Dorsolateral prefrontal cortex (tissue), 120 donors: ENCODE measurements at regions of chr1 and their contacts with region 1.

Region 1: GRCh38 chr1:243471754-243472745 is 216.2 kb downstream of the SDCCAG8 start:
- DNase-seq: no peak
- H3K4me3 ChIP-seq: peak overlapping the region in 1 of 59 donors; percentile 57
- H3K27ac ChIP-seq: peak overlapping the region in 58 of 59 donors; percentile 4 to 91 (median 76)
- H3K27me3 ChIP-seq: no peaks in the 10 kb centered on the region
- CTCF ChIP-seq: no peak

Region 2: DNA sequence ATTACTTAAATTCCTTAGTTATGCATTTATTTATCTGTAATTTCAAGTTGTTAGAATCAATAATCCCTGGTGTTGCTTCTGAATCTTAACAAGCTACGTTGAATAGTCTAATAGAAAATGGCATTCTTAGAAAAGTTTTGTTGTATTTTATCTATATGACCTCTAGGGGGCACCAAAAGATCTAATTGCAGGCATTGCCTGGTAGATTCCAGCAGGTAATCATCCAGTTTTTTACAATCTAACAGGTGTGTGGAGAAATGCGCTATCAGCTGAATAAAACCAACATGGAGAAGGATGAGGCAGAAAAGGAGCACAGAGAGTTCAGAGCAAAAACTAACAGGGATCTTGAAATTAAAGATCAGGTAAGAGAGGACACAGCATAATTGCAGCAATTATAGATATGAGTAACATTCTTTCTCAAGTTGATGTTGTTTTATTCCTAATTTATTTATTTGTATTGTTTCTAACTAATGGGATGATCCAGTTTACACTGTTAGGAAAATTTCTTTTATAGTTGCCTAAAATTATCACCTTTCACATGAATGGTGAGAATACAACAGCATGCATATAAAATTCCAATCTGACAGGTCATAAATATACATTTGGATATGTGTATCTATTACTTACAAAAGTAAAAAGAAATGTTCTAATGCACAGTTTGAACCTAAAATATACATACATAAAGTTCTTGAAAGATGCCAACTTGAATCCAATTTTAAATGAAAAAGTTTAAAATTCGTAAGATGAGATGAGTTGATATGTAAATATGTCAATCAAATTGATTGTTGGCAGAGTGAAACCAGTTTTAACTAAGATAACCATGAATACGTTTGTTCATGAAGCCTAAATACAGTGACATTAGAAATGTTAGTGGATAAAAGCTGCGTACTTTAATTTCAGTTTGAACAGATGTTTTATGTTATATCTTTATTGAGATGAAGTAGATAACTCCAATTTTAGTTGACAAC is 127.8 kb before region 1 on chr1:
- intact Hi-C with region 1: loop called (anchors 5 kb)
- DNase-seq: peak in 1 of 10 donors; percentile 25
- H3K4me3 ChIP-seq: no peak overlapping the region
- H3K27ac ChIP-seq: peak overlapping the region in 3 of 59 donors; percentile 3 to 30 (median 13)
- H3K27me3 ChIP-seq: no peaks in the 10 kb centered on the region
- CTCF ChIP-seq: peak; percentile 59 to 95 (median 82)

Region 3: DNA sequence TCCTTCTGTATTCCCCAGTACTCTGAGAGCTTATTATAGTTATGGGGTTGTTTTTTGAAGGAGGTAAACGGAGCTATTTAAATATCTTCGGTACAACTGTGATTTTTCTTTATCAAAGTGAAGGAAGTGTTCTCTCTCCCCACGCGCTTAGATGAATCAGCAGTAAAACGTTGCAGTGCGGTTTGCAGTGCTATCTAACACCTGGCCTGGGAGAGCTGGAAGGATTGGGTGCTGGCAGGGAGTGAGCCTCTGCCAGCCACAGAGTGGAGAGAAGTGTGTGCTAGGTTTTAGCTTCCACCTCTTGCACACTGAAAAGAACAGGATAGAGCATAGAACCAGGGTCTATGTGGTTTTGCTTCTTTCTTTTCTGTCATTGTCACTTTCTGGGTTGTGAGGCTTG is 50.3 kb before region 1 on chr1:
- intact Hi-C with region 1: loop called in 1 of 2 experiments (anchors 5 kb)
- DNase-seq: peak in 7 of 10 donors; percentile 33 to 74 (median 55)
- H3K4me3 ChIP-seq: peak overlapping the region; percentile 20 to 70 (median 56)
- H3K27ac ChIP-seq: peak overlapping the region in 56 of 59 donors; percentile 3 to 90 (median 74)
- H3K27me3 ChIP-seq: no peaks in the 10 kb centered on the region
- CTCF ChIP-seq: no peak

Region 4: DNA sequence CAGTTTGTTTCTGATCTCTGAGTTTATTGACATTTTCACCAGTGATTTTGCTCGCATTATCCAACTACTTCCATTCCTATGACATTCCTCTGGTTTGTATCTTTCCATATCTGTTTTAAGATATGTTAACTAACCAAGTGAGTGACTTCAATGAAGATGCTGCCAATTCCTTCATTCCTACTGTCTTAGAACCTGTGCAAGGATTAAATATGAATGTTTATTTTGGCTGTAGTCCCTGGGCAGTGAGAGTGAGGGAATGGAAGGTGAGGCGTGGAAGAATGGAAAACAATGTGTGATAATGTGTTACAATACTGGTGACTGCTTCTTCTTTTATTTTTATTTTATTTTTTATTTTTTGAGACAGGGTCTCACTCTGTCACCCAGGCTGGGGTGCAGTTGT is 33.2 kb before region 1 on chr1:
- intact Hi-C with region 1: no loop called
- DNase-seq: no peak
- H3K4me3 ChIP-seq: no peak overlapping the region
- H3K27ac ChIP-seq: no peak overlapping the region
- H3K27me3 ChIP-seq: no peaks in the 10 kb centered on the region
- CTCF ChIP-seq: no peak

Region 5: GRCh38 chr1:243708210-243708609 is 236.2 kb after region 1 on chr1:
- intact Hi-C with region 1: loop called in 1 of 2 experiments (anchors 5 kb)
- DNase-seq: no peak
- H3K4me3 ChIP-seq: no peak overlapping the region
- H3K27ac ChIP-seq: peak overlapping the region in 1 of 59 donors; percentile 12
- H3K27me3 ChIP-seq: no peaks in the 10 kb centered on the region
- CTCF ChIP-seq: peak in 51 of 56 donors; percentile 8 to 67 (median 47)

Region 6: GRCh38 chr1:243748706-243749283 is 276.7 kb after region 1 on chr1:
- intact Hi-C with region 1: loop called (anchors 2 to 10 kb)
- DNase-seq: peak in 1 of 10 donors; percentile 46
- H3K4me3 ChIP-seq: no peak overlapping the region
- H3K27ac ChIP-seq: peak overlapping the region in 5 of 59 donors; percentile 1 to 35 (median 9)
- H3K27me3 ChIP-seq: no peaks in the 10 kb centered on the region
- CTCF ChIP-seq: peak; percentile 66 to 96 (median 86)

Region 7: DNA sequence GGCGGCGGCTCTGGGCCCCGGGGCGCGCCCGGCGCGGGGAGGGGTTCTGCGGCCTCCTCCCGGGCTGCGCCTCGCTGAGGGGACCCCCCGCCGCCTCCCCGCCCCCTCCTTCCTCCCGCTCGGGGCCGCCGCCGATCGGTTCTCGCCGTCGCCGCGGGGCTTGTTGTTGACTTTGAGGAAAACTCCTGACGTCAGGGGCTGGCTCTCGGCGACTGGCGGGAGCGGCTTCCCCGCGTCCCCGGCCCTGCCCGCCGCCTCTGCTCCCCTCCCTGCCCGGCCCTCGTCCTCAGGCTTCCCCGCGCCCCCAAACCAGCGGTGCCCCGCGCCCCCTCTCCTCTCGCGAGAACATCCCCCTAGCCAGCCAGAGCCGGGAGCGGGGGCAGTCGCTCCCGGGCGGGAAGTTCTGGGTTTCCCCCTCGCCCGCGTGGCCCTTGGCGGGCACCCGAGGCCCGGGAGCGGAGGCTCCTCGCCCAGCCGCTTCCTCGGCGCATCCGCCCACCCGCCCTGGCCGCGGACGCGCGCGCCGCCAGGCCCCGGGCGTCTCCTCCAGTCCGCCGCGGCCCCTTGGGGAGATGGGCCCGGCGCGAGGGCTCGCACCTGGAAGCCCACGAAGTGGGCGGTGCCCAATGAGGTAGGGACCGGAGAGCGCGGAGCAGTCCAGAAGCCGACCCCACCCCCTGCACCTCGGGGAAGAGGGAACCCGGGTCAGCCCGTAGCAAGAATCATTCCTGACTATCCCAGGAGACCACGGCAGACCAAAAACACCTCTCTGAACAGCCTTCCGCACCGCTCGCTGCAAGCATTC is 378.6 kb after region 1 on chr1:
- intact Hi-C with region 1: loop called in 1 of 2 experiments (anchors 10 kb)
- DNase-seq: peak; percentile 63 to 84 (median 78)
- H3K4me3 ChIP-seq: peak overlapping the region; percentile 59 to 92 (median 81)
- H3K27ac ChIP-seq: peak overlapping the region; percentile 72 to 100 (median 97)
- H3K27me3 ChIP-seq: no peaks in the 10 kb centered on the region
- CTCF ChIP-seq: peak in 4 of 56 donors; percentile 3 to 20 (median 8)

Region 8: DNA sequence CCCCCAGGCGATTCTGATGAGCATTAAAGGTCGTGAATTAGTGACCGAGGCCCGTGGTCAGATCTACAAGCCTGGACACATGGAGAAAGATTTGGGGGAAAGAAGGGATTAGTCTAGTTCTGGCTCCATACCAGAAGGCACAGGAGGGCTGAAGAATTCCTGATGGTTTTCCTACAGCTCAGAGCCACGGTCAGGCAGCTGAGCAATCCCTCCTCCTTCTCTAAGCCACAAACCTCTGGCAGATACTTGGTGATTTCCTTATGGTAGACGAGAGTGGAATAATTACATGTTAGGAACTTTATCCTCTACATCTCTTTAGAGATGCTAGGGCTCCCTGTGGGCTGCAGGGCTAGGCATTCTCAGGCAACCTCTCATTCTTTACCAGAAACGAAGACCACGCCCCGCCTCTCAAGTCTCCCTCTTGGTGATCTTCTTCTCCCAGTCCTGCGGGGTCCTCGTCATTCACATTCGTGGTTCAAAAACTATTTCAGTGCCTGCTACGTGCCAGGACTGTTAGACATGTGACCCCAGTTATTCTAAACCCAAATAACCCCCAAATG is 558.5 kb after region 1 on chr1:
- intact Hi-C with region 1: loop called in 1 of 2 experiments (anchors 10 kb)
- DNase-seq: no peak
- H3K4me3 ChIP-seq: no peak overlapping the region
- H3K27ac ChIP-seq: no peak overlapping the region
- H3K27me3 ChIP-seq: no peaks in the 10 kb centered on the region
- CTCF ChIP-seq: no peak